ENCODE measurements at regions of chr12 and their contacts with region 1.

Region 1: GRCh38 chr12:122078141-122079032 is at the start of gene MLXIP:
- DNase-seq: peak; percentile 95
- ATAC-seq: peak; percentile 77
- H3K4me3 ChIP-seq: peak within 1 kb of the TSS; percentile 63 to 88 (median 78)
- H3K4me3 Mint-ChIP-seq: peak within 1 kb of the TSS; percentile 92
- H3K27ac ChIP-seq: peak within 1 kb of the TSS; percentile 14 to 74
- H3K27ac Mint-ChIP-seq: peak within 1 kb of the TSS; percentile 86
- H3K4me1 ChIP-seq: peaks cover 55 to 66% of the 10 kb centered on the region in 2 donors
- H3K4me1 Mint-ChIP-seq: peaks cover 55% of the 10 kb centered on the region
- H3K27me3 ChIP-seq: no peaks in the 10 kb centered on the region
- H3K27me3 Mint-ChIP-seq: no peaks in the 10 kb centered on the region
- CTCF ChIP-seq: no peak
- total RNA-seq, gene MLXIP: 91.2 and 94.5 TPM in 2 replicates

Region 2: GRCh38 chr12:121802846-121803630 is 275.3 kb before region 1 on chr12:
- CTCF ChIA-PET with region 1: no interaction called
- POLR2A ChIA-PET with region 1: no interaction called
- intact Hi-C with region 1: loop called (anchors 5 kb)
- DNase-seq: peak; percentile 98
- ATAC-seq: peak; percentile 51
- H3K4me3 ChIP-seq: peak overlapping the region; percentile 79 to 95 (median 89)
- H3K4me3 Mint-ChIP-seq: peak overlapping the region; percentile 90
- H3K27ac ChIP-seq: peak overlapping the region; percentile 97
- H3K27ac Mint-ChIP-seq: peak overlapping the region; percentile 98
- H3K4me1 ChIP-seq: peaks cover 33 to 53% of the 10 kb centered on the region in 2 donors
- H3K4me1 Mint-ChIP-seq: peaks cover 50% of the 10 kb centered on the region
- H3K27me3 ChIP-seq: no peaks in the 10 kb centered on the region
- H3K27me3 Mint-ChIP-seq: no peaks in the 10 kb centered on the region
- CTCF ChIP-seq: no peak

Region 3: DNA sequence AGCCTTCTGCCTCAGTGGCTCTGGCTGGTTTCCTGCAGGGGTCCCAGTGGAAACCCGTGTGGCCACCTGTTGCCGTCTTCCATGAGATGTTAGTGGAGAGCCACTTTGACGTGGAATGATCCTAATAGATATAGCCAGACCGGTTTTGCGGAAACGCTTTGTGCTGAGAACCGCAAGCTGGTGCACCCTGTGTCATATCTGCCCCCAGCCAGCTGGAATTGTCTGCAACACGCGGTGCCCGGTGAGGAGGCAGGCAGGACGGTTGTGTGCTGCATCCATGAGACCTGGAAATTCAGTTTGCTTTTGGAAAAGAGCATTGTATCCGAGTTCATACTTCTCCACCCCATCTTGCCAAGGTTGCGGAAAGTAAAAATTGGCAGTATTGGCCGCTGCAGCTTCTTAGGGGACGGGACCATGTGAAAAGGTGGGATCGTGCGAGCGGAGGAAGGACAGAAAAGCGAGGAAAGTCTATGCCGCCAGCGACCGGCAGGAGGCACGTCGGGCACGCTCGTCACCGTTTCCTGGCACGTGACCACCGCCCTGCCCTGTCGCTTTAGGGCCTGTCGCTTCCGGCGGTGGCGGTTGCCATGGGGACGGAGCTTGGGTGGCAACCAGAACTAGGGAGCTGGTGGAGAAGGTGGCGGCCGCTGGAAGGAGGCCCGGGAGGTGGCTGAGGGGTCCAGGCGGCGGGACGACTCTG is 160.3 kb before region 1 on chr12 and contains the start of gene CFAP251:
- CTCF ChIA-PET with region 1: interaction called, 4 read pairs
- POLR2A ChIA-PET with region 1: no interaction called
- intact Hi-C with region 1: loop called (anchors 1 kb)
- DNase-seq: peak; percentile 96
- ATAC-seq: peak; percentile 98
- H3K4me3 ChIP-seq: peak within 1 kb of the TSS in 4 of 5 experiments; percentile 28 to 64 (median 52)
- H3K4me3 Mint-ChIP-seq: peak within 1 kb of the TSS; percentile 92
- H3K27ac ChIP-seq: peak within 1 kb of the TSS in 1 of 2 donors; percentile 77
- H3K27ac Mint-ChIP-seq: peak within 1 kb of the TSS; percentile 80
- H3K4me1 ChIP-seq: peaks cover 8 to 11% of the 10 kb centered on the region in 2 donors
- H3K4me1 Mint-ChIP-seq: peaks cover 11% of the 10 kb centered on the region
- H3K27me3 ChIP-seq: no peaks in the 10 kb centered on the region
- H3K27me3 Mint-ChIP-seq: no peaks in the 10 kb centered on the region
- CTCF ChIP-seq: peak; percentile 86
- total RNA-seq, gene CFAP251: 1.4 and 1.6 TPM in 2 replicates

Region 4: GRCh38 chr12:122051231-122051876 is 27.0 kb before region 1 on chr12:
- CTCF ChIA-PET with region 1: interaction called, 25 read pairs
- POLR2A ChIA-PET with region 1: interaction called, 3 read pairs
- intact Hi-C with region 1: no loop called
- DNase-seq: no peak
- ATAC-seq: no peak
- H3K4me3 ChIP-seq: no peak overlapping the region
- H3K4me3 Mint-ChIP-seq: no peak overlapping the region
- H3K27ac ChIP-seq: no peak overlapping the region
- H3K27ac Mint-ChIP-seq: no peak overlapping the region
- H3K4me1 ChIP-seq: peaks cover 0 to 4% of the 10 kb centered on the region in 2 donors
- H3K4me1 Mint-ChIP-seq: peaks cover 1% of the 10 kb centered on the region
- H3K27me3 ChIP-seq: no peaks in the 10 kb centered on the region
- H3K27me3 Mint-ChIP-seq: no peaks in the 10 kb centered on the region
- CTCF ChIP-seq: no peak

Region 5: GRCh38 chr12:122123051-122123760 is 44.8 kb after region 1 on chr12:
- CTCF ChIA-PET with region 1: interaction called, 58 read pairs
- POLR2A ChIA-PET with region 1: no interaction called
- intact Hi-C with region 1: loop called (anchors 5 kb)
- DNase-seq: peak; percentile 82
- ATAC-seq: peak; percentile 65
- H3K4me3 ChIP-seq: no peak overlapping the region
- H3K4me3 Mint-ChIP-seq: no peak overlapping the region
- H3K27ac ChIP-seq: no peak overlapping the region
- H3K27ac Mint-ChIP-seq: peak overlapping the region; percentile 62
- H3K4me1 ChIP-seq: peaks cover 7 to 10% of the 10 kb centered on the region in 2 donors
- H3K4me1 Mint-ChIP-seq: peaks cover 21% of the 10 kb centered on the region
- H3K27me3 ChIP-seq: no peaks in the 10 kb centered on the region
- H3K27me3 Mint-ChIP-seq: no peaks in the 10 kb centered on the region
- CTCF ChIP-seq: peak; percentile 85

Region 6: GRCh38 chr12:122421821-122422729 is 343.7 kb after region 1 on chr12 and contains the start of gene CLIP1:
- CTCF ChIA-PET with region 1: no interaction called
- POLR2A ChIA-PET with region 1: no interaction called
- intact Hi-C with region 1: no loop called
- DNase-seq: peak; percentile 79
- ATAC-seq: peak; percentile 66
- H3K4me3 ChIP-seq: peak within 1 kb of the TSS; percentile 71 to 87 (median 82)
- H3K4me3 Mint-ChIP-seq: peak within 1 kb of the TSS; percentile 90
- H3K27ac ChIP-seq: peak within 1 kb of the TSS; percentile 73 to 78
- H3K27ac Mint-ChIP-seq: peak within 1 kb of the TSS; percentile 89
- H3K4me1 ChIP-seq: peaks cover 26 to 40% of the 10 kb centered on the region in 2 donors
- H3K4me1 Mint-ChIP-seq: peaks cover 40% of the 10 kb centered on the region
- H3K27me3 ChIP-seq: no peaks in the 10 kb centered on the region
- H3K27me3 Mint-ChIP-seq: no peaks in the 10 kb centered on the region
- CTCF ChIP-seq: peak; percentile 64
- total RNA-seq, gene CLIP1: 62.4 and 64.9 TPM in 2 replicates